HEK293 (cell line): ENCODE measurements at regions of chr2 and their contacts with region 1.

Region 1: GRCh38 chr2:231411831-231412617 is 16.5 kb downstream of the B3GNT7 start:
- H3K4me3 ChIP-seq: peak overlapping the region; percentile 67
- H3K27ac ChIP-seq: no peak overlapping the region; the same call in 1 of the 2 replicates
- H3K4me1 ChIP-seq: no peaks in the 10 kb centered on the region
- CTCF ChIP-seq: peak; percentile 95

Region 2: GRCh38 chr2:231222318-231223055 is 189.5 kb before region 1 on chr2:
- CTCF ChIA-PET with region 1: interaction called, 48 read pairs
- POLR2A ChIA-PET with region 1: no interaction called
- H3K4me3 ChIP-seq: no peak overlapping the region
- H3K27ac ChIP-seq: no peak overlapping the region
- H3K4me1 ChIP-seq: no peaks in the 10 kb centered on the region
- CTCF ChIP-seq: no peak

Region 3: GRCh38 chr2:231297108-231297908 is 114.7 kb before region 1 on chr2:
- CTCF ChIA-PET with region 1: interaction called, 11 read pairs
- POLR2A ChIA-PET with region 1: no interaction called
- H3K4me3 ChIP-seq: no peak overlapping the region
- H3K27ac ChIP-seq: no peak overlapping the region
- H3K4me1 ChIP-seq: no peaks in the 10 kb centered on the region
- CTCF ChIP-seq: peak; percentile 60; the same call in 1 of the 2 replicates

Region 4: GRCh38 chr2:231399853-231400680 is 12.0 kb before region 1 on chr2:
- CTCF ChIA-PET with region 1: interaction called, 10 read pairs
- POLR2A ChIA-PET with region 1: interaction called, 3 read pairs
- H3K4me3 ChIP-seq: no peak overlapping the region
- H3K27ac ChIP-seq: no peak overlapping the region
- H3K4me1 ChIP-seq: no peaks in the 10 kb centered on the region
- CTCF ChIP-seq: no peak

Region 5: DNA sequence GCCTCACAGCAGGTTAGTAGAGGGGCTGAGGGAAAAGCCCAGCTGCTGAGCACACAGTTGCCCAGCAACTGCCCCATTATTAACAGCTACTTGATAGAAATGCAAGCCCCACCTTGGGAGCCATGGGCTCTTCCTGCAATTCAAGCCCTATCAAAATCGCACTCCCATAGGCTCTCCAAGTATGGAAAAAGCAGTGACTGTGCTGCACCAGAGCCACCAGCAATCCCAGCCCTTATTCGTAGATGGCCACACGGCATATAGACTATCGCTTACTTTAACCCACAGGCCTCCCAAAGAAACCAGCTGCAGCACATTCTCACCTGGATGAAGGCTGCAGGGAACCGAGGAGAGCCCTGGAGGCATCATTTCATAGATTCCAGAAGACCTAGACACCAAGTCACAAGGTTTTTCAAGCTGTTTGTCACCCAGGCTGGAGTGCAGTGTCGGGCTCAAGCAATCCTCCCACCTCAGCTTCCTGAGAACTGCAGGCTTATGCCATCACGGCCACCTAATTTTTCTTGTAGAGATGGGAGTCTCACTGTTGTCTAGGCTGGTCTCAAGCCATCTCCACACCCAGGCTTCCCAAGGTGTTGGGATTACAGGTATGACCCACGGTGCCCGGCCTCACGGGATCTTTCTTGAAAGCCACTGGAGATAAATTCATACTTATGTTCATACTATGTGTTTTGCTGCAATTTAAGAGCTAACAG is 40.9 kb after region 1 on chr2:
- CTCF ChIA-PET with region 1: interaction called, 22 read pairs
- POLR2A ChIA-PET with region 1: interaction called, 7 read pairs
- H3K4me3 ChIP-seq: no peak overlapping the region
- H3K27ac ChIP-seq: 0 out of 2 replicates have a peak overlapping the region, but pooled peaks have one; percentile 7
- H3K4me1 ChIP-seq: no peaks in the 10 kb centered on the region
- CTCF ChIP-seq: no peak